Right ventricle myocardium superior (tissue), 1 donor: ENCODE measurements at regions of chrX and their contacts with region 1.

Region 1: DNA sequence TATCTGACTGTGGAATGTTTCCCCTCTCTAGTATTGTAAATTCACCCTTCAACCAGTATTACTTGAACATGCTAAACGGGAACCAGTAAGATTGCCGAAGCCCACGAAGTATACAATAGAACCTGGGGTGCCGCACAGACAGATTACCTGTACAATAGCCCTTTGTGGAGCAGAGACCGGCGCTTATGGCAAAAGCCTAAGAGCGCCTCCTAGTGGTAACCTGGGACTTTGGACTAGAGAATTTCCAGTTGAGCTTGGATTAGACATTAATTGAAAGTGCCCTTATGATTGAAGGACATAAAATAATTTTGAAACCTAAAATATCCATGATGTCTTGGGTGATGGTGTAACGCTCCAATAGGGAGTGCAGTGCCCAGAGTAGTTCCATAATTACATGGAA is 14.1 kb downstream of the ZNF157 start:
- DNase-seq: no peak
- ATAC-seq: peak; percentile 66

Region 2: GRCh38 chrX:47156611-47157520 is 227.6 kb before region 1 on chrX:
- intact Hi-C with region 1: no loop called
- DNase-seq: no peak
- ATAC-seq: no peak

Region 3: GRCh38 chrX:47523297-47523696 is 138.8 kb after region 1 on chrX:
- intact Hi-C with region 1: loop called (anchors 10 kb)
- DNase-seq: peak; percentile 89
- ATAC-seq: peak; percentile 100